ENCODE measurements at regions of chr11 and their contacts with region 1.

Region 1: DNA sequence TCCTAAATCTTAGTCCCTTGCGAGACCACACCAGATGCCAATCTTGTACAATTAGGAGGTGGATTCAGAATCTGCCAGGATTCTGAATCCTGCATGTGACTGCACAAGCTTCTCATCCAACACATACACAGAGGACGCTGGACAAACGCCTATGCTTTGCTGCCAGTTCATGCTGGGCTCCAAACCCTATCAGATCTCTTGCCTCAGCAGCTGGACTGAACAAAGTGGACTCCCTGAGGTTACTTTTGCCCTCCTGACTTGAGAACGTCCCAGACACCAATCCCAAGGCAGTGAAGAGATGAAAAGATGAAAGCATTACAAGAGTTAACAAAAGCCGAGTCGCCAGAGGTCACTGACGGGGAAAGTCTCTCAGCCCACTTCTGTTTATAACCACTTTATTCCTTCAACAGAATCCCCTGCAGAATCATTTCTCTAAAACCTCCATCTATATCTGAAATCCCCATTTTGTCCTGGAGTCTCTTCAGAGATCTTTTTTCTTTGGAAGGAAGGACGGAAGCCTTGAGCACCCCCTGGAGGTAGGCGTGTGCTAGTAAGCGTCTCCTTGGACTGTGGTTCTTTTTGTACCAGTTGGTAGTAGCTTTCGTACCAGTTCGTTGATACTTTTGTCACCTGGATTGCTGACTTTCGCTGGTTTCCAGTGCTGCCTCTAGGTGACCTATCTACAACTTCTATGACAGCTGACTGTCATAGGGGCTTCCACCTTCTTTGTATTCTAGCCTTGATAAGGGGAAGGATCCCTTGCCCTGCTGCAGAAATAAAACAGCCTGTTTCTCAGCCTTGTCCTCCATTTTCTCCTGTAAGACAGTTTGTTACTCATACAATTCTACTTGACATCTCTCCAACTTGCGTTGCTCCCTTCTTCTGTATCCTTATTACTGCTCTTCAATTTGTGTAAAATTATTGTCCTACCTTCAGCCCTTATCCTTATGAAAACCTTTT is 26.1 kb upstream of the EED start:
- DNase-seq: peak; percentile 59 to 84 (median 73)
- ATAC-seq: peak; percentile 90 to 91
- H3K4me3 ChIP-seq: peak overlapping the region; percentile 50
- H3K27ac ChIP-seq: no peak overlapping the region
- H3K4me1 ChIP-seq: no peaks in the 10 kb centered on the region
- H3K27me3 ChIP-seq: no peaks in the 10 kb centered on the region

Region 2: GRCh38 chr11:85867751-85868150 is 350.7 kb before region 1 on chr11:
- intact Hi-C with region 1: loop called in 1 of 4 experiments (anchors 10 kb)
- DNase-seq: no peak
- ATAC-seq: no peak
- H3K4me3 ChIP-seq: no peak overlapping the region
- H3K27ac ChIP-seq: no peak overlapping the region
- H3K4me1 ChIP-seq: no peaks in the 10 kb centered on the region
- H3K27me3 ChIP-seq: no peaks in the 10 kb centered on the region

Region 3: GRCh38 chr11:86335122-86335767 is 116.8 kb after region 1 on chr11:
- intact Hi-C with region 1: no loop called
- DNase-seq: no peak
- ATAC-seq: no peak
- H3K4me3 ChIP-seq: no peak overlapping the region
- H3K27ac ChIP-seq: no peak overlapping the region
- H3K4me1 ChIP-seq: no peaks in the 10 kb centered on the region
- H3K27me3 ChIP-seq: no peaks in the 10 kb centered on the region

Region 4: GRCh38 chr11:86440305-86440716 is 221.9 kb after region 1 on chr11:
- intact Hi-C with region 1: no loop called
- DNase-seq: peak; percentile 71 to 84 (median 81)
- ATAC-seq: peak; percentile 86 to 94
- H3K4me3 ChIP-seq: no peak overlapping the region
- H3K27ac ChIP-seq: peak overlapping the region; percentile 14
- H3K4me1 ChIP-seq: peaks cover 7% of the 10 kb centered on the region
- H3K27me3 ChIP-seq: no peaks in the 10 kb centered on the region

Measured in right cardiac atrium (tissue), 5 donors.